ENCODE measurements at regions of chr5 and their contacts with region 1.

Region 1: DNA sequence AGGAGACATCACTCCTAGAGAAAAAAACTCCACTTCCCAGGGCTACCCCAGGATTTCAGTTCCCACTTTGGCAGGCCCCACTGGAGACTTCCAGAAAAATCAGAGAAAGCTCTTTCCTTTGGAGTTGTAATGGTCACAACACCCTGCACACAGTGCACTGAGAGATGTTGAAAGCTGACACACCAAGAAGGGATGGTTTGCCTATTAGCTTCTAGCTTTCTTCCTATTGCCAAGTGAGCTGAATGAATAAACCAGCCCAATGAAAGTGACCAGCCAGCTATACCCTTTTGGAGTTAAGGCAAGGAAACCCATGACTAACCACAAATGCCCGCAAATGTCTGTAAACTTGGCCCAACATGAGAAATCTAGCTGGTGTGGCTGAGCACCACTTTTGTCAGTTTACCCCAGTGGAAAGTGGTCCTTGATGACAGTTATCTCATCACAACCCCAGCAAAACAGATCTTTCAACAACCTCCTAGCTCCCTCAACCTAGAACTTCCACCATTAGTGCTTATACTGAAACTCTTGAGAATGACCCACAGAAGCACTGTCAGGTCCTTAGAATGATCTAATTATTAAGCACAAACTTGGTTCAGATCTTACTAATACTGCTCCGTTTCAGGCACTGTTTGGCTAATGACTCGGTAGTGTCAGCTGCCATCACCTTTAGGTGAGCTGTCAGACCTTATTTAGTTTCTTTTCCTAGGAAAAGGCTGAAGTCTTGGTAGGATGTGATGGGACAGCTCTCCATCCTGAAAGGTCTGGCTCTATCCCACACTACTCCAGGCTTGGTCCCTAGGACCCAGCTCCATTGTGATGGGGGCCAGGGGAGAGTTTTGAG is 11.2 kb downstream of the IRF1 start:
- DNase-seq: no peak
- ATAC-seq: no peak
- H3K4me3 ChIP-seq: no peak overlapping the region
- H3K27ac ChIP-seq: no peak overlapping the region
- H3K4me1 ChIP-seq: peaks cover 0 to 13% of the 10 kb centered on the region in 2 experiments; a peak in 3 of 5 replicates
- H3K27me3 ChIP-seq: no peaks in the 10 kb centered on the region
- CTCF ChIP-seq: no peak
- EP300 ChIP-seq: no peak
- POLR2A ChIP-seq: no peak
- RAD21 ChIP-seq: no peak

Region 2: GRCh38 chr5:132238169-132238744 is 241.1 kb before region 1 on chr5:
- CTCF ChIA-PET with region 1: no interaction called
- POLR2A ChIA-PET with region 1: no interaction called
- in situ Hi-C with region 1: no loop called
- intact Hi-C with region 1: no loop called
- DNase-seq: peak; percentile 64 to 86 (median 77)
- ATAC-seq: peak; percentile 94
- H3K4me3 ChIP-seq: no peak overlapping the region
- H3K27ac ChIP-seq: no peak overlapping the region
- H3K4me1 ChIP-seq: no peaks in the 10 kb centered on the region; a peak in 2 of 5 replicates
- H3K27me3 ChIP-seq: no peaks in the 10 kb centered on the region
- CTCF ChIP-seq: peak; percentile 80 to 87 (median 81)
- EP300 ChIP-seq: no peak
- POLR2A ChIP-seq: no peak
- RAD21 ChIP-seq: peak; percentile 41 to 86

Region 3: GRCh38 chr5:132406144-132406783 is 73.1 kb before region 1 on chr5:
- CTCF ChIA-PET with region 1: no interaction called
- POLR2A ChIA-PET with region 1: no interaction called
- in situ Hi-C with region 1: no loop called
- intact Hi-C with region 1: no loop called
- DNase-seq: no peak
- ATAC-seq: no peak
- H3K4me3 ChIP-seq: no peak overlapping the region
- H3K27ac ChIP-seq: no peak overlapping the region
- H3K4me1 ChIP-seq: peaks cover 10 to 12% of the 10 kb centered on the region in 2 experiments; a peak in 4 of 5 replicates
- H3K27me3 ChIP-seq: no peaks in the 10 kb centered on the region
- CTCF ChIP-seq: no peak
- EP300 ChIP-seq: no peak
- POLR2A ChIP-seq: no peak
- RAD21 ChIP-seq: no peak

Region 4: DNA sequence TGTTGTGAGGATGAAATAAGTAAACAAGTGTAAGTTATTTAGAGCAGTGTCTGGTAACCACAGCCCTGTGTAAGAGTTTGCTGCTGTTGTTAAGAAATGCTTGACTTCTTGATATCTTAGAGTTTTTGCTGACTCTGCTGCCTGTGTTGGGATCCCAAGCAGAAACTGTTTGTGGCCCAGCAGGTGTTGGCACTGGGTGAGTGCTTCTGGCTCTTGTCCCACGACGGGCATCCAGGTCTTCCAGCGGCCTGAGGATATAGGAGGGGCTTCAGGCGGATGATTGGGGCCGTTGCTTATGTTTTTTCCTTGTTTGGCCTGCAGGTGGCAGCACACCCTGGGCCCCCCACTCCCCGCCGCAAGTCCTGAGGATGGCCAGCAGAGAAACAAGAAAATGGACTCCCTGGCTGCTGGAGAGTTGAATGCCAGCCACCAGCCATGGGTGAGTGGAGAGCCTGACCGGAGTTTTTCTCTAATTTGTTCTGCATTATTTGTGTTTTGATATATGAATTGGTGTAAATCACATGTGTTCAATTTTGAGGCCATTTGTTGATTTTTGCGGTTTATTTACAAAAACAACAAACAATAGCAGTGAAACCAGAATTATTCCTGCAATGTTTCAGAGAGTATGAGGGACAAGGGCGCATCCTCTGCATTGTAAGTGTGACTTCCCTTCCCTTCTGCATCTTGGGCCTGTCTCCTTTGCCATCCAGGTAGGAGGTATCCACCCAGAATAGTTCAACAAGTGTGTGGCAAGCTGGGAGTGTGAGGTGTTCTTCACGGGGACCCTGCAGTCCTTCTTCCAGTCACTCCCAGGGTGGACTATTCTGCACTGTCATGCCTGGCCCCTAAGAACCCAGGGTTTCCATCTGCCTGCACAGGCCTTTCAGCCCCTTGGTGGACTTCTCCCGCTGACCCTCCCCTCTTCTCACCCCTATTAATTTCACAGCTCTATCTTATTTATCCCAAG is 59.5 kb before region 1 on chr5:
- CTCF ChIA-PET with region 1: no interaction called
- POLR2A ChIA-PET with region 1: interaction called, 10 read pairs
- in situ Hi-C with region 1: no loop called
- intact Hi-C with region 1: no loop called
- DNase-seq: peak; percentile 85 to 89 (median 88)
- ATAC-seq: peak; percentile 81
- H3K4me3 ChIP-seq: no peak overlapping the region
- H3K27ac ChIP-seq: peak overlapping the region; percentile 42; the same call in 2 of the 3 replicates
- H3K4me1 ChIP-seq: peaks cover 22 to 50% of the 10 kb centered on the region in 2 experiments
- H3K27me3 ChIP-seq: no peaks in the 10 kb centered on the region
- CTCF ChIP-seq: peak; percentile 89 to 95 (median 90)
- EP300 ChIP-seq: peak; percentile 8; the same call in 1 of the 2 replicates
- POLR2A ChIP-seq: no peak
- RAD21 ChIP-seq: peak; percentile 94 to 96

Region 5: DNA sequence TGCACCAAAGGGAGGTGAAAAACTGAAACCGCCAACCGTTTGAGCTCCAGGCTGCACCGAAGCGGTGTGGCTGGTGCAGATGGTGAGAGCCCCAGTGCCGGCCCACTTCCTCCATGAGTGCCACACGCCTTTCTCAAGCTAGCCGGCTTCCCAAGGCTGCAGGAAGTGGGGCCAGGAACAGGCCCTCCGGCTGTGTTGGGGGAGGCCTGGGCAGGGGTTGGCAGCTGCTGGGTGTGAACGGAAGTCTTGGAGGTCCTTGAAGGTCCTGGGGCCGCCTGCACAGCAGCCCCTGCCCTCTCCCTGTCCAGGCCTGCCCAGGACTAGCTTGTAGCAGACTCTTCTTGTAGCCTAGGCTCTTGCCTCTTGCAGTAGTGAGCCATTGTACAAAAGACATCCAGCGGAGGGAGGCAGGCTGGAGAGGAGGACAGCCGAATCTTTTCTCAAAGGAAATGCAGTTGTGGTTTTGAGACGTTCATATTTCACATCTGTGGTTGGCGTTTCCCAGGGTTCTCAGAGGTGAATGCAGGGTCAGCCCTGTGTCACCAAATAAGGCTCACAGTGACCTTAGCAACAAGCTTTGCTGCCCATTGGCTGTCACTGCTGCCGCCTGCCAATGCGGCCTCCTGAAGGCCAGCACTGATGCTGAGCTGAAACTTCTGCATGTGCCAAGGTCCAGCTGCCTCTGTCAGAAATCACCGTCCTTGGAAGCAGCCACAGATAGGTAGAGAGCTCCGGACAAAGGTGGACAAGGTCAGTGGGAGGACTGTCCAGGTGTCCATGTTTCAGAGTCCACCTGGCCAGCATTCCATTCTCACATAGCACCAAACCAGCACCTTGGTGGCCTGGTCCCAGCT is 12.7 kb before region 1 on chr5:
- CTCF ChIA-PET with region 1: no interaction called
- POLR2A ChIA-PET with region 1: interaction called, 61 read pairs
- in situ Hi-C with region 1: no loop called
- intact Hi-C with region 1: no loop called
- DNase-seq: peak in 2 of 4 experiments; percentile 50 to 76
- ATAC-seq: peak; percentile 68
- H3K4me3 ChIP-seq: no peak overlapping the region
- H3K27ac ChIP-seq: peak overlapping the region; percentile 54; the same call in 1 of the 3 replicates
- H3K4me1 ChIP-seq: peaks cover 24 to 28% of the 10 kb centered on the region in 2 experiments
- H3K27me3 ChIP-seq: no peaks in the 10 kb centered on the region
- CTCF ChIP-seq: no peak
- EP300 ChIP-seq: 0 out of 2 replicates have a peak, but pooled peaks have one; percentile 22
- POLR2A ChIP-seq: no peak
- RAD21 ChIP-seq: peak in 1 of 2 experiments; percentile 34; a peak in 2 of 4 replicates